Common myeloid progenitor, CD34-positive (primary cell): ENCODE measurements at regions of chr2 and their contacts with region 1.

Region 1: GRCh38 chr2:65017335-65017734 is 28.1 kb downstream of the SLC1A4 start:
- DNase-seq: peak; percentile 90 to 92 (median 91)
- H3K4me3 ChIP-seq: peak overlapping the region in 3 of 7 experiments; percentile 7 to 62 (median 53)
- H3K27ac ChIP-seq: no peak overlapping the region
- H3K4me1 ChIP-seq: peaks cover 18 to 40% (median 37%) of the 10 kb centered on the region in 4 experiments
- H3K27me3 ChIP-seq: no peaks in the 10 kb centered on the region

Region 2: DNA sequence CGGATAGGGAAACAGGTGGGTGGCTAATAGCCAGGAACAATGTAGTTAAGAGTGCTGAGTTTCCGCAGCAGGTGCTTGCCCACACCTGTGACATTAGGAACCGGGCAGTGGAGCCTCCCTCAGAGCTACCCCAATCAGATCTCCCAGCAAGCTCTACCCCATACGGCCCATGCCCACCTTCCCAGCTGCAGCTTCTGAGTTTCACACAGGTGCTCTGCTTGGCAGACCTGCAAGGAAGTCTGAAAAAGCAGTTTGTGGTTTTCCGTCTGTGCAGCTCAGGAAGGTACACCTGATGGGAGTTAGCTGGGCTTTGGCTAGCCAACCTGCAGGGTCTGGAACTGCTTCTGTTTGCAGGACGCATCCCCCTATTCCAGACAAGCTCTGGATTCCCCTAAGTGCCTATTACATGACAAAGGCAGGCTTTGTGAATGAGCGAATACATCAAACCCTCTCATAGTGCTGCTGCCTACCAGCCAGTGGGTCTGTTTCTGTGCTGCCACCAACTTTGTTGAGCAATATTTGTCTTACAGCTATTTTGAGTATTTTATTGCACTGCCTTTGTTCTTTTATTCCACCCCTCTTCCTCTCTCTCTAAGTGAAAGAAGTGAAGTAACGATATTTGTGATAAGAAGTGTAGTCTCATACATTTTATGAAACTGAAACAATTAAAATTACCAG is 14.1 kb after region 1 on chr2:
- CTCF ChIA-PET with region 1: interaction called, 76 read pairs
- POLR2A ChIA-PET with region 1: interaction called, 4 read pairs
- DNase-seq: peak in 2 of 3 donors; percentile 29 to 34
- H3K4me3 ChIP-seq: peak overlapping the region in 2 of 7 experiments; percentile 14 to 37
- H3K27ac ChIP-seq: no peak overlapping the region
- H3K4me1 ChIP-seq: peaks cover 9 to 33% (median 20%) of the 10 kb centered on the region in 4 experiments
- H3K27me3 ChIP-seq: no peaks in the 10 kb centered on the region

Region 3: DNA sequence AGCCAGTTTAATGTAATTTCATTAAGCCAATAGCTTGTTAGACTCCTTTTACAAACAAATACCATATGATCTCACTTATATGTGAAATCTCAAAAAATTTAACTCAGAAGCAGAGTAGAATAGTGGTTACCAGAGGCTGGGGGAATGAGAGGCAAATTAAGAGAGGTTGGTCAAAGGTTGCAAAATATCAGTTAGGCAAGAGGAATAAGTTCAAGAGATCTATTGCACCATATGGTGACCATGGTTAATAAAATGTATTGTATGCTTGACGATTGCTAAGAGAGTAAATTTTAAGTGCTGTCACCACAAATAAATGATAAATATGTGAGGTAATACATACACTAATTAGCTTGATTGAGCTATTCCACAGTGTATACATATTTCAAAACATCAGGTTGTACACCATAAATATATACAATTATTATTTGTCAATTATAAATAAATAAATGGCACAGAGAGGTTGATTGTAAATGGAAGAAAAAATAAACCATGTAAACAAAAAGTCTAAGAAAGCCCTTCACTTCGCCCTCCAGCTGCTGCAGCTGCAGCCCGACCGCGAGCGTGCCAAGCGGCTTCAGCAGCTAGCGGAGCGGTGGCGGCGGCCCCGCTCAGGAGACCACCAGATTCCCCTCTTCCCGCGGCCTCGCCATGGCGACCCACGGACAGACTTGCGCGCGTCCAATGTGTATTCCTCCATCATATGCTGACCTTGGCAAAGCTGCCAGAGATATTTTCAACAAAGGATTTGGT is 187.3 kb after region 1 on chr2:
- CTCF ChIA-PET with region 1: no interaction called
- POLR2A ChIA-PET with region 1: no interaction called
- DNase-seq: peak; percentile 27 to 79 (median 72)
- H3K4me3 ChIP-seq: peak overlapping the region in 1 of 7 experiments; percentile 40
- H3K27ac ChIP-seq: no peak overlapping the region
- H3K4me1 ChIP-seq: no peaks in the 10 kb centered on the region
- H3K27me3 ChIP-seq: no peaks in the 10 kb centered on the region